ENCODE measurements at regions of chr21 and their contacts with region 1.

Region 1: GRCh38 chr21:24895885-24896734 is 711.2 kb downstream of the MRPL39 start:
- DNase-seq: peak; percentile 49
- ATAC-seq: peak; percentile 87
- H3K4me3 ChIP-seq: no peak overlapping the region
- H3K27ac ChIP-seq: no peak overlapping the region
- H3K4me1 ChIP-seq: no peaks in the 10 kb centered on the region
- H3K27me3 ChIP-seq: no peaks in the 10 kb centered on the region
- CTCF ChIP-seq: peak; percentile 48 to 62 (median 50)
- EP300 ChIP-seq: no peak
- POLR2A ChIP-seq: no peak
- RAD21 ChIP-seq: peak; percentile 91

Region 2: GRCh38 chr21:24955275-24955961 is 59.3 kb after region 1 on chr21:
- CTCF ChIA-PET with region 1: no interaction called
- POLR2A ChIA-PET with region 1: no interaction called
- RAD21 ChIA-PET with region 1: interaction called, 7 read pairs
- SMC1A ChIA-PET with region 1: interaction called, 14 read pairs
- in situ Hi-C with region 1: no loop called
- intact Hi-C with region 1: loop called (anchors 2 kb)
- DNase-seq: peak; percentile 82
- ATAC-seq: peak; percentile 92
- H3K4me3 ChIP-seq: no peak overlapping the region
- H3K27ac ChIP-seq: no peak overlapping the region
- H3K4me1 ChIP-seq: no peaks in the 10 kb centered on the region; the same call in 1 of the 2 replicates
- H3K27me3 ChIP-seq: no peaks in the 10 kb centered on the region
- CTCF ChIP-seq: no peak
- EP300 ChIP-seq: 0 out of 4 replicates have a peak, but pooled peaks of 1 of the 2 experiments have one; percentile 33
- POLR2A ChIP-seq: no peak
- RAD21 ChIP-seq: no peak

Region 3: DNA sequence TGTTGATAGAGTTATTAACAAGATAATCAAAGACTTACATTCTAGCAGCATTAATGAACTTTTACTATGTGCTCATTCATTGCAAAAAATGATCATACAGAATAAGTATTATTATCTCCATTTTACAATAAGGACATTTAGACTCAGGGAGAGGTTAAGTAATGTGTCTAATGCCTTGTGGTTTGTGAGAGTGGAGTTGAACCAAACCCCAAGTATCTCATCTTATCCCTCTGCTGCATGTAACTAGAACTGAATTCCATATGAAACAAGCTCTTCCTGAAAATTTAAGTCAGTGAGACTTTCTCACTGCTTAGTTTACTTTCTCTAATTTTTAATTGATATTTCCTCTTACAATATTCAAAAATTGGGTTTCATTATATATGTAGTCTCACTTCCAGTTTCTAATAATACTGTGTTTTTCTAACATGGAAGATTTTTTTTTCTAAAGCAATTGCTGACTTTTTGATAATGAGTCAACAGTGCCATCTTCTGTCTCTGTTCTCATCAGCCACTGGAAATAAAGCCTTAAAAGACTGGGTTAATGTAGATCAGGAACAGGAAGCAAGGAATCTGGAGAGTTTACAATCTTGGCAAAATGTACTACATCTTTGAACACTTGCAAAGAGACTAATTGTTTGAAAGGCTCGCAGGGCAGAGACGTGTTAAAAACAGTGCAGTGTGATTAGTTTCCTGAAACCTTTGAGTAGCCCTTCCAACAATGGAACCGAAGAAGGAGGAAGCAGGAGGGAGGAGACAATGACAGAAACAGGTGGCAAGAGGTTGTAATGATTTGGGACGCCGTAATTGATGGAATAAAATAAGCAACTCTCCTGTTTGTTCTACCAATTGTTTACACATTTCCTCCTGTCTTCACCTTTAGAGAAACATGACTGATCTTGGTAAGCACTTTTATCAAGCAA is 143.6 kb after region 1 on chr21:
- CTCF ChIA-PET with region 1: interaction called, 50 read pairs
- POLR2A ChIA-PET with region 1: no interaction called
- RAD21 ChIA-PET with region 1: interaction called, 45 read pairs
- SMC1A ChIA-PET with region 1: interaction called, 72 read pairs
- in situ Hi-C with region 1: loop called (anchors 5 kb)
- intact Hi-C with region 1: loop called (anchors 1 kb)
- DNase-seq: peak; percentile 82
- ATAC-seq: peak; percentile 89
- H3K4me3 ChIP-seq: peak overlapping the region; percentile 20; the same call in 1 of the 2 replicates
- H3K27ac ChIP-seq: 0 out of 2 replicates have a peak overlapping the region, but pooled peaks have one; percentile 4
- H3K4me1 ChIP-seq: 0 out of 2 replicates have a peak, but pooled peaks cover 2% of the 10 kb centered on the region
- H3K27me3 ChIP-seq: no peaks in the 10 kb centered on the region
- CTCF ChIP-seq: peak; percentile 36 to 67 (median 66)
- EP300 ChIP-seq: 0 out of 4 replicates have a peak, but pooled peaks of 1 of the 2 experiments have one; percentile 40
- POLR2A ChIP-seq: no peak
- RAD21 ChIP-seq: peak; percentile 71

Region 4: DNA sequence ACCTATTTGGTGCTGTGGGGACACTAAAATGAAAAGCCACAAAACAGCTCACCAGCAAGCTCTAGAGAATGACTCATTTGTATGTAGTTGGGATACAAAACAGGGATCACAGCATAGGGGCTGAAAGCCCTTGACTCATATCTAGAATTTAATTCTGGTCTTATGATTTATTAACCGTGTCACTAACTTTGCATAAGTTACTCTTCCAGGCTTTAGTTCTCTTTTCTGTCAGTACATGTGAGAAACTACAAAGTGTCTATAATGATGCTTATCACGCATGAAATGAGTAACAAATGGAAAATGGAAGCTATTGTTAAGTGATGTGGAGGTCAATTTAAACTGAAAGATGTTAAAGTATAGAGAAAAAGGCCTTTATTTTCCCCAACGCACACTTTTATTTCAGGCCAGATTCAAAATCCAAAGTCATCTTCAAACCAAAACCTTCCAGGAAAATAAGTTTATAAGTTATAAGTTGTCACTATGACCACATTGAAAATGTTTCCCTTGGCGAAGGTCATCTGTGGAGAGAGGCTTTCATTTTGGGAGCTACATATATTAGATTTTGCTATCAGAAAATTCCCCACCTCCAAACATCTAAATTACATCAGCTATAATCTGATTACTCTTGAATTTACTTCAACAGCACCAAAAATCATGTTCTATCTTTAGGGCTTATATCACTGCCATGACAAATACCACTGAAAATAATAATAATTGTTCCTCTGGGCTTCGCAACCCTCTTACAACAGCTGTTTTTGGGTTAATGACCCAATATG is 280.7 kb after region 1 on chr21:
- CTCF ChIA-PET with region 1: interaction called, 3 read pairs
- POLR2A ChIA-PET with region 1: no interaction called
- RAD21 ChIA-PET with region 1: interaction called, 4 read pairs
- SMC1A ChIA-PET with region 1: interaction called, 4 read pairs
- in situ Hi-C with region 1: loop called (anchors 10 kb)
- intact Hi-C with region 1: loop called (anchors 5 kb)
- DNase-seq: peak; percentile 87
- ATAC-seq: peak; percentile 92
- H3K4me3 ChIP-seq: no peak overlapping the region
- H3K27ac ChIP-seq: peak overlapping the region; percentile 58; the same call in 1 of the 2 replicates
- H3K4me1 ChIP-seq: peaks cover 12% of the 10 kb centered on the region
- H3K27me3 ChIP-seq: no peaks in the 10 kb centered on the region
- CTCF ChIP-seq: no peak
- EP300 ChIP-seq: peak; percentile 95 to 97
- POLR2A ChIP-seq: no peak
- RAD21 ChIP-seq: no peak

Region 5: DNA sequence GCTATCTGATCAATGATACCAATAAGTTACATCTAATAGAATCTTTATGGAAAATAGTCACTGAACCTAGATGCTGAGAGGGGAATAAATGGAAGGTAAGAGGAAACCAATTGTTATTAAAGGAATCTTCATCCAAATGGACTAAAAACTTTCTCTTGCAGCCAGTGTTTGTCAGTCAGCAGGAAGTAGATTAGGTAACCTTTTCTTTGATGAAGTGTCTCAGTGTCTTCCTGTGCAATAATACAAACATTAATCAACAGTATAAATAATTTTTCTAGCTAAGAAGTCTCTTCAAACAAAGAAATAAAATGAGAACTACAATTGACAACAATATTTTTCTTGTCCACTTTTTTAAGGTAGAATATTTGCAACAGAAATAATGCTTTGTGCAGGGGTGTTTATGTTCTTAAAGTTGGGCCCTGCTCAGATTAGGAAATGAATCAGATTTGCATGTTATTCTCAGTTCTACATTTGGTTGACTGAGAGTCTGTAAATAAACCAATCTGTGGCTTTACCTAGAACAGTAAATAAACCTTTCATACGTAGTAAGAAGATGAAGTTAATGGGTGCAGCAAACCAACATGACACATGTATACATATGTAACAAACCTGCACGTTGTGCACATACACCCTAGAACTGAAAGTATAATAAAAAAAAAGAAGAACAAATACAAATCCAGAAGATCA is 319.7 kb after region 1 on chr21:
- CTCF ChIA-PET with region 1: no interaction called
- POLR2A ChIA-PET with region 1: no interaction called
- RAD21 ChIA-PET with region 1: no interaction called
- SMC1A ChIA-PET with region 1: no interaction called
- in situ Hi-C with region 1: no loop called
- intact Hi-C with region 1: loop called (anchors 10 kb)
- DNase-seq: peak; percentile 40
- ATAC-seq: peak; percentile 96
- H3K4me3 ChIP-seq: no peak overlapping the region
- H3K27ac ChIP-seq: peak overlapping the region; percentile 8; the same call in 1 of the 2 replicates
- H3K4me1 ChIP-seq: peaks cover 3% of the 10 kb centered on the region; the same call in 1 of the 2 replicates
- H3K27me3 ChIP-seq: no peaks in the 10 kb centered on the region
- CTCF ChIP-seq: no peak
- EP300 ChIP-seq: peak in 1 of 2 experiments; percentile 56; a peak in 1 of 4 replicates
- POLR2A ChIP-seq: no peak
- RAD21 ChIP-seq: no peak

Region 6: DNA sequence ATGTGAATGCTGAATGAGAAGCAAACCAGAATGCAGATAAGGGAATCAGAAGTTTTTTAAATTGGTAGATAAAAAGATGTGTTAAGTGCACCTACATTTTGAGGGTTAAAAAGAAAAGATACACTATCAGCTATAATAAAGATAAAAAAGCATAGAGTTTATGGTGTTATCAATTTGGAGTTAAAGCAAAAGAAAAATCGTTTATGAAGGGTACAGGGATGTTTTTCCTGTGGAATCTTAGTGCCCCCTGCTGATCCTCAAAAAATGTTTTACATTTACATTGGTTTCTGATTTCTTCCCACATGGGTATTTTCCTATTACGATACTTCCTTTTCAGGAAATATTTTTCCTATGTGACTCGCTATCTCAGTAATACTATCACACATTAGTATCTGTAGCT is 417.7 kb after region 1 on chr21:
- CTCF ChIA-PET with region 1: interaction called, 18 read pairs
- POLR2A ChIA-PET with region 1: no interaction called
- RAD21 ChIA-PET with region 1: interaction called, 20 read pairs
- SMC1A ChIA-PET with region 1: interaction called, 34 read pairs
- in situ Hi-C with region 1: loop called (anchors 10 kb)
- intact Hi-C with region 1: loop called (anchors 1 kb)
- DNase-seq: no peak
- ATAC-seq: peak; percentile 38; the same call in 2 of the 3 replicates
- H3K4me3 ChIP-seq: no peak overlapping the region
- H3K27ac ChIP-seq: no peak overlapping the region
- H3K4me1 ChIP-seq: no peaks in the 10 kb centered on the region
- H3K27me3 ChIP-seq: no peaks in the 10 kb centered on the region
- CTCF ChIP-seq: peak; percentile 30 to 46 (median 31); a peak in 4 of 6 replicates
- EP300 ChIP-seq: no peak
- POLR2A ChIP-seq: no peak
- RAD21 ChIP-seq: peak; percentile 67

Measured in GM12878 (cell line).